Dorsolateral prefrontal cortex (tissue), 120 donors: ENCODE measurements at regions of chr5 and their contacts with region 1.

Region 1: GRCh38 chr5:168365581-168366081 is 74.2 kb downstream of the WWC1 start:
- DNase-seq: peak in 3 of 10 donors; percentile 19 to 49 (median 47)
- H3K4me3 ChIP-seq: peak overlapping the region in 1 of 59 donors; percentile 23
- H3K27ac ChIP-seq: peak overlapping the region in 40 of 59 donors; percentile 1 to 82 (median 58)
- H3K27me3 ChIP-seq: peaks cover 0 to 2% (median 0%) of the 10 kb centered on the region in 45 donors
- CTCF ChIP-seq: peak in 5 of 56 donors; percentile 5 to 21 (median 11)

Region 2: GRCh38 chr5:168282120-168282519 is 83.5 kb before region 1 on chr5:
- intact Hi-C with region 1: loop called in 1 of 2 experiments (anchors 10 kb)
- DNase-seq: peak in 1 of 10 donors; percentile 56
- H3K4me3 ChIP-seq: no peak overlapping the region
- H3K27ac ChIP-seq: no peak overlapping the region
- H3K27me3 ChIP-seq: peaks cover 0 to 5% (median 0%) of the 10 kb centered on the region in 45 donors
- CTCF ChIP-seq: no peak

Region 3: GRCh38 chr5:168434001-168434400 is 68.4 kb after region 1 on chr5:
- intact Hi-C with region 1: loop called in 1 of 2 experiments (anchors 2 kb)
- DNase-seq: peak in 9 of 10 donors; percentile 14 to 87 (median 71)
- H3K4me3 ChIP-seq: no peak overlapping the region
- H3K27ac ChIP-seq: peak overlapping the region in 33 of 59 donors; percentile 11 to 64 (median 40)
- H3K27me3 ChIP-seq: no peaks in the 10 kb centered on the region
- CTCF ChIP-seq: no peak